Aorta (tissue), 5 donors: ENCODE measurements at regions of chr6 and their contacts with region 1.

Region 1: DNA sequence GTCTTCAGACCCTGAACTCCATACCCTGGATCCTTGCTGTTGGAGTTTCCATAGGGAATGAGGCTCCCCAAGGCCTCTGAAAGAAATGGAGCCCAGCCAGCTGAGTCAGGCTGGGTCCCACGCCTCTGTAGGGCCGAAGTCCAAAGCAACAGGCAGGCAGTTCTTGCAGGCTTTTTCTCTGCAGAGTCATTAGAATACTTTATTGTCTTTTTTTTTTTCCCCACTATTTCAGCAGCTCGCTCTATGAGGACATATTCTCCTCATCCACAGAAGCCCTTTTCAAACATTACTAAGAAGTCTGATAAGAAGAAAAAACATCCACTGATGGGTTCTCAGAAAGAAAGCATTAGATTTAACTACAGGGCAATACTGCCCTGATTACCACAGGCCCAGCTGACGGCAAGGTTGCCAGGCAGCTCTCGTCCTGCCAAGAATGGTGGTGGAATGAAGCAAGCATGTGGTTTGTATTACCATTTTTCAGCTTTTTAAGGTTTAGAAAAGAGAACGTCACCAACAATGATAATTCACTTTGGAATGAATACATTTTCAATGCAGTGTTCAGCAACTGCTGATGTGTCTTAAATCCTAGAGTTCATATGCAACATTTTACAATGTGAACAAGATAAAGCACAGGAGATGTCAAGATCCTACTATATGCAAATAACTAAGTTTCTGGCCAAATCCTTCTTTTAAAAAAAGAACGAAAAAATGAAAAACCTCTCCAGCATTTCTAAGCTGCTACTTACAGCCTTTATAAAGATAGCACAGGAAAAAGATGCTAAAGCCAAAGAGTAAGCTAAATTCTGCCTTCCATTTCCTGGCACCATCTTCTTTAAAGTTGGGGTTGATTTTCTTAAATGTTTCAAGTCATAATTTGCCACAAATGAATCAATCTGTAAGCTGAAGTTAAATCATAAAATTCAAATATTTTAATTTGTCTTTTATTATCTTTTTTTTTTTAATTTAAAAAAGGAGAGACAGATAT is 223.6 kb upstream of the CITED2 start:
- DNase-seq: peak; percentile 88 to 94
- ATAC-seq: peak; percentile 89
- H3K4me3 ChIP-seq: no peak overlapping the region
- H3K27ac ChIP-seq: peak overlapping the region; percentile 61 to 96
- H3K4me1 ChIP-seq: peaks cover 0 to 8% of the 10 kb centered on the region in 2 donors
- H3K27me3 ChIP-seq: no peaks in the 10 kb centered on the region

Region 2: GRCh38 chr6:139474145-139475108 is 123.6 kb before region 1 on chr6:
- intact Hi-C with region 1: no loop called
- DNase-seq: no peak
- ATAC-seq: peak; percentile 71
- H3K4me3 ChIP-seq: peak overlapping the region; percentile 9 to 43
- H3K27ac ChIP-seq: no peak overlapping the region
- H3K4me1 ChIP-seq: peaks cover 3 to 5% of the 10 kb centered on the region in 2 donors
- H3K27me3 ChIP-seq: no peaks in the 10 kb centered on the region

Region 3: DNA sequence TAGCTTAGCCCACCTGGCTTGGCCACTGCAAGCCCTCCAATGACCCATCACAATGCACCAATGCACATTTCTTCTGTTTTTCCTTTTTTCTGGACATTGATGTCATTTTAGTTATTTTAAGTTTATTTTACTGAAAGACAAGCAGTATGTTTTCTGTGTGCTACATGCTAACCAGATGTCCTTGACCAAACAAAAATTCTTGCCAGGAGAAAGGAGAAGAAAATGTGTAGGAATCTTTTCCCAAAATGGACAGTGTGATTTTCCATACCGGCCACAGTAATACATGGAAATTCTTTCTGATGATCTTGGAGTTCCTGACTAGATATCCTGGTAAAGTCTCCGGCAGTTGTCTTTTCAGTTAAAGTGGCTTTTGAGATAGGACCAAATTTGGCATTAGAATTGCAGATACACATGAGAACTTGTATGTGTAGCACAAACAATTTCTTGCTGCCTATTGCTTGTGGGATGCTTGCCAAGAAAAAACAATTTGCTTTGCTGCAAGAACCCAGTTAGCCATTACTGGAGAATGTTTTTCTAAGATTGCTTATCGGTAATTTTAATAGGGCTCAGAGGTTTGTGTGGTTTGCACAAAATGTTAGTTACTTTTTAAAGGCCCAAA is 472.9 kb after region 1 on chr6:
- intact Hi-C with region 1: loop called in 1 of 2 experiments (anchors 5 kb)
- DNase-seq: no peak
- ATAC-seq: no peak
- H3K4me3 ChIP-seq: no peak overlapping the region
- H3K27ac ChIP-seq: no peak overlapping the region
- H3K4me1 ChIP-seq: peaks cover 2 to 9% of the 10 kb centered on the region in 2 donors
- H3K27me3 ChIP-seq: no peaks in the 10 kb centered on the region